GM10248 (cell line): ENCODE measurements at regions of chr11 and their contacts with region 1.

Region 1: GRCh38 chr11:33161120-33162005 is at the start of gene CSTF3:
- DNase-seq: peak; percentile 93
- CTCF ChIP-seq: no peak

Region 2: GRCh38 chr11:32939046-32939445 is 222.3 kb before region 1 on chr11:
- CTCF ChIA-PET with region 1: no interaction called
- POLR2A ChIA-PET with region 1: no interaction called
- DNase-seq: peak; percentile 29
- CTCF ChIP-seq: no peak

Region 3: GRCh38 chr11:33179348-33179803 is 18.0 kb after region 1 on chr11:
- CTCF ChIA-PET with region 1: interaction called, 26 read pairs
- POLR2A ChIA-PET with region 1: no interaction called
- DNase-seq: no peak
- CTCF ChIP-seq: no peak

Region 4: GRCh38 chr11:33320016-33320813 is 158.9 kb after region 1 on chr11:
- CTCF ChIA-PET with region 1: interaction called, 37 read pairs
- POLR2A ChIA-PET with region 1: no interaction called
- DNase-seq: peak; percentile 17
- CTCF ChIP-seq: peak; percentile 26

Region 5: DNA sequence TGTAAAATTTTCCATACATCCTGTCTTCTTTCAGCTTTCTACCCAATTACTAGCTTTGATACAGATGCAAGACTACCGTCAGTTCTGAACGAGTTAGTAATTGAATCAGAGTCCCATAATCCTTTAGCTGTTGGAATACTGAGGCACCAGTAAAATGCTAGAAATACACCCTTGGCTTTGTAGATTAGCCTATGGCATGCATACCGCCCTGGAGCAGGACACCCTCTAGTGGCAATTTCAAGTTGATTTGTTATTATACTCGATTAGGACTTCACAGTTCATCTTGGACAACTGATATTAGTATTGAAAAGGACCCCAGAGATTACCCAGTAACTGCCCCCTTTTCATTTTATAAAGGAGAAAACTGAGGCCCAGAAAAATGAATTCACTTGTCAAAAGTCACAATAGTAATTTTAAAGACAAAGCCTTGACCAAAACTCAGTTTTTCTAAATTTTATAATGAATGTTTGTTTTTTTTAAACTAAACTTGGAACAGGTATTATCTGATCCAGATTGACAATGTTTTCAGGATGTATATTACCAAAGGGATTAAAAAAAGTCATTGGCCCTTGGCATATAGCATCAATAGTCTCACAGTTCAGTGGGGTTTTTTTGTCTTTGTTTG is 168.5 kb after region 1 on chr11:
- CTCF ChIA-PET with region 1: interaction called, 41 read pairs
- POLR2A ChIA-PET with region 1: no interaction called
- DNase-seq: peak; percentile 43
- CTCF ChIP-seq: peak; percentile 63